AG04449 (cell line): ENCODE measurements at regions of chr15 and their contacts with region 1.

Region 1: GRCh38 chr15:72285927-72286516 is 13.7 kb upstream of the PARP6 start:
- DNase-seq: no peak
- H3K4me3 ChIP-seq: no peak overlapping the region
- CTCF ChIP-seq: peak; percentile 46

Region 2: GRCh38 chr15:72272213-72273002 is 13.6 kb before region 1 on chr15 and contains the start of gene PARP6:
- CTCF ChIA-PET with region 1: interaction called, 28 read pairs
- POLR2A ChIA-PET with region 1: no interaction called
- DNase-seq: peak; percentile 83
- H3K4me3 ChIP-seq: peak within 1 kb of the TSS; percentile 85
- CTCF ChIP-seq: peak; percentile 78

Region 3: DNA sequence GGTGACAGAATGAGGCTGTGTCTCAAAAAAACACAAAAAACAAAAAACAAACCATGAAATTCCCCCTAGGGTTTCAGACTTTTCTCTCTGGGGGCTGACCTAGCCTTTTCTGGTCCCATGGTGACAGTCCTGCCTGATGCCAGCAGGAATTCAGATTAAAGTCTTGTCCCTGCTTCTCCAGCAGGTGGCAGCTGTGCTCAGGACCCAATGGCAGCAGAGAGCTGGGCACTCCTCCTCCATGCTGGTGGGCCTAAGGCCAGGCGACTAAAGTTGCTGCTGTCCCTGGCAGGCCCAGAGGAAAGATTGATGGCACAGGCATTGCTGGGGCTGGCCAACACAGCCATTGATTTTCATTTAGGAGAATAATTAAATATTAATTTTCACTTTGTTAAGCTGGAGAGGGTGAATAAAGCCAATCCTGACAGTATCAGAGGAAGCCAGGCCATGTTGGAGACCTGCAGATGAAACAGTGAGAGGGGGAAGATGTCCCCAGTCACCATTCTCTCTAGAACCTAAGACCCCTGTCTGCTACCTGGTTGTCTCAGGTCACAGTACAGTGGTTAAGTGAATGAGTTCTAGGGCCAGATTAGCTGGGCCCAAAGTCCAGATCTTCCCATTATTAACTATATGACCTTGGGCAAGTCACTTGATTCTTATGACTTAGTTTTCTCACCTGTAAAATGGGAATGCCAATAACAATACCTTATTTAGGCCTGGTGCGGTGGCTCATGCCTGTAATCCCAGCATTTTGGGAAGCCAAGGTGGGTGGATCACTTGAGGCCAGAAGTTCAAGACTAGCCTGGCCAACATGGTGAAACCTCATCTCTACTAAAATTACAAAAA is 26.8 kb after region 1 on chr15:
- CTCF ChIA-PET with region 1: interaction called, 10 read pairs
- POLR2A ChIA-PET with region 1: no interaction called
- DNase-seq: peak; percentile 12
- H3K4me3 ChIP-seq: no peak overlapping the region
- CTCF ChIP-seq: peak; percentile 89